H1 (cell line): ENCODE measurements at regions of chr17 and their contacts with region 1.

Region 1: DNA sequence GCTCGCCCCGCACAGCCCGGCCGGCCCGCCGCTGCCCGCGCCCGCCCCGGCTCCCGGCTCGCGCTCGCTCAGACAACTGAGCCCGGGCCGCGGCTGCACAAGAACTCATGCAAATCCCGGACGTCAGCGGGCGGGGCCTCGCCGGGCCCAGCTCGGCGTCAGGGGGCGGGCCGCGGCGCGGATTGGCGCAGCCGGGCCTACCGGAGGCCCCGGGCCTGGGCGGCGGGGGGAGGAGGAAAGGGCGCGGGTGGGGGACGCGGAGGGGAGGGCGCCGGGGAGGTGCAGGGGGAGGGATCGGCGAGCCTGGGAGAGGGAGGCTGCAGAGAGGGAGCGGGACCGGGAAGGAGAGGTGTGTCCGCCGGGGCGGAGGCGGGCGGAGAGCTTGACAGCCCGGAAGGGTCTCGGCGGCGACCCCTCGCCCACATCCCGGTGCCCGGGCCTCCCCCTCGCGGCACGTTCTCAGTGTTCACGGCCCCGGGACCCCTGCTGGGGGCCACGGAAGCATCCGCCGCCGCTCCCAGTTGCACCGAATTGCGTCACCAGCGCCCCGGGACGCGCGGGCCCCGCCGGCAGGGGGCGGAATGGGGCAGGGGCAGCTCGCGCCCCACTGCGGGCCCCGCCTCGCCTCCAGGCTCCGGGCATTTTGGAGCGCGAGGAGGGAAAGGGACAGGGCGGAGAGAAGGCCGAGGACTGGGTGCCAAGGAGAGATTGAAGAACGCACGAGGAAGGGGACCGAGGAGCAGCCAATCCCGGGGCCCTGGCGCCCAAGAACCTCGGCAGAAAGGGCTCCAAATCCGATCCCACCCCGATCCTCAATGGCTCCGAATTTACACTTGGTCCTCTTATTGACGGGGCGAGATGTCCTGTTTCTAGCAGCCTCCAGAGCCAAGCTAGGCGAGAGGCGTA is at the start of gene CBX4:
- DNase-seq: peak in 1 of 2 experiments; percentile 85
- H3K4me3 ChIP-seq: peak within 1 kb of the TSS; percentile 43 to 63 (median 60)
- H3K27ac ChIP-seq: no peak within 1 kb of the TSS
- H3K4me1 ChIP-seq: peaks cover 6 to 51% (median 38%) of the 10 kb centered on the region in 4 experiments
- H3K27me3 ChIP-seq: peaks cover 63 to 87% (median 84%) of the 10 kb centered on the region in 4 experiments
- CTCF ChIP-seq: peak; percentile 54 to 69 (median 61)
- EP300 ChIP-seq: 0 out of 3 replicates have a peak, but pooled peaks of 1 of the 2 experiments have one; percentile 27
- POLR2A ChIP-seq: peak in 1 of 2 experiments; percentile 50; a peak in 2 of 3 replicates
- RAD21 ChIP-seq: peak; percentile 17 to 45; a peak in 3 of 4 replicates
- total RNA-seq, gene CBX4: 3.2 and 4.0 TPM in 2 replicates

Region 2: GRCh38 chr17:79728226-79728907 is 111.2 kb before region 1 on chr17:
- CTCF ChIA-PET with region 1: no interaction called
- POLR2A ChIA-PET with region 1: no interaction called
- DNase-seq: peak; percentile 49 to 91
- H3K4me3 ChIP-seq: 0 out of 8 replicates have a peak overlapping the region, but pooled peaks of 1 of the 4 experiments have one; percentile 12
- H3K27ac ChIP-seq: no peak overlapping the region
- H3K4me1 ChIP-seq: peaks cover 0 to 6% (median 0%) of the 10 kb centered on the region in 4 experiments; a peak in 2 of 7 replicates
- H3K27me3 ChIP-seq: no peaks in the 10 kb centered on the region
- CTCF ChIP-seq: no peak
- EP300 ChIP-seq: no peak
- POLR2A ChIP-seq: no peak
- RAD21 ChIP-seq: no peak

Region 3: GRCh38 chr17:79777894-79778503 is 61.6 kb before region 1 on chr17 and contains the start of gene CBX2:
- CTCF ChIA-PET with region 1: interaction called, 10 read pairs
- POLR2A ChIA-PET with region 1: interaction called, 5 read pairs
- DNase-seq: peak in 1 of 2 experiments; percentile 85
- H3K4me3 ChIP-seq: peak within 1 kb of the TSS; percentile 57 to 97 (median 83)
- H3K27ac ChIP-seq: peak within 1 kb of the TSS; percentile 85
- H3K4me1 ChIP-seq: peaks cover 4 to 19% (median 15%) of the 10 kb centered on the region in 4 experiments
- H3K27me3 ChIP-seq: no peaks in the 10 kb centered on the region; a peak in 1 of 7 replicates
- CTCF ChIP-seq: no peak
- EP300 ChIP-seq: no peak
- POLR2A ChIP-seq: peak; percentile 63 to 85
- RAD21 ChIP-seq: no peak
- total RNA-seq, gene CBX2: 83.9 and 85.9 TPM in 2 replicates

Region 4: GRCh38 chr17:79796763-79797491 is 42.7 kb before region 1 on chr17 and contains the start of gene CBX8:
- CTCF ChIA-PET with region 1: interaction called, 576 read pairs
- POLR2A ChIA-PET with region 1: interaction called, 374 read pairs
- DNase-seq: peak; percentile 99 to 100
- H3K4me3 ChIP-seq: peak within 1 kb of the TSS; percentile 44 to 67 (median 53)
- H3K27ac ChIP-seq: peak within 1 kb of the TSS; percentile 66; the same call in 1 of the 2 replicates
- H3K4me1 ChIP-seq: peaks cover 8 to 58% (median 38%) of the 10 kb centered on the region in 4 experiments
- H3K27me3 ChIP-seq: peaks cover 80 to 92% (median 90%) of the 10 kb centered on the region in 4 experiments
- CTCF ChIP-seq: no peak
- EP300 ChIP-seq: peak in 1 of 2 experiments; percentile 59; a peak in 1 of 3 replicates
- POLR2A ChIP-seq: peak in 1 of 2 experiments; percentile 43; a peak in 1 of 3 replicates
- RAD21 ChIP-seq: no peak
- total RNA-seq, gene CBX8: 1.5 and 2.1 TPM in 2 replicates

Region 5: DNA sequence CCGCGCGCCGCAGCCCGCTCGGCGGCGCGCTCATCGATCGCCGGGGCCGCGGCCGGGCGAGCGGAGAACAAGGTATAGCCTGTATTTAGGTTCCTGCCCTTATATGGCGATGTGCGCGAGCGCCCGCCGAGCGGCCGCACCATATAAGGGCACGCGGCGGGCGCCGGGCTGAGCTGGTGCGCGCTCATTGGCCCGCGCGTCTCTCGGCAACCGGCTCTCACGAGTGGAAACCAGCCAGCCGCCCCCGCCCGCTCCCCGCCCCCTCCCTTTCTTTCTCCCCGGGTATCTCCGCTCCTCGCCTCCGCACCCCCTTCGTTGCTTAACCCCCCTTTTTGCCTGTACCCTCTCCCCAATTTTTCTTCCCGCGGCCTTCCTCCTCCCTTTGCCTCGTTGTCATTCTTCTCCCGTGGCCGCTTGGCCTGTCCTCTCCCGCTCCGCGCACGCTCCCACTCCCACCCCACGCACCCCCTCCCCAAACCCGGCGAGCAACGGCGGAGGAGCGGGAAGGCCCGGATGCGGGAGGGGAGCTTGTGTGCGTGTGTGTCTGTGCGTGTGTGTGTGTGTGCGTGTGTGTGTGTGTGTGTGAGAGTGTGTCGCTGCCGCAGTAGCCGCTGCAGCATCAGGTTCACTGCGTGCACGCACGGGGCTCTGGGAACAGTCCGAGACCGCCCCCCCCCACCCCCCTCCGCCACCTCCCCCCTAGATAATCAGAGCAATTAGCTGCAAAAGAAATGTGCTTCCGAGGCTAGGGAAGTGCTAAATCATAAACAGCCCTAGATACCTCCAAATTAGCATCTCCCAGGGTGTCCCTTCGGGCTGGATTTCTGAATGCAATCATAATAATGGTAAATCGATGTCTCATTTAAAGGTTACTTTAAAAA is 29.2 kb before region 1 on chr17:
- CTCF ChIA-PET with region 1: interaction called, 576 read pairs
- POLR2A ChIA-PET with region 1: interaction called, 374 read pairs
- DNase-seq: peak in 1 of 2 experiments; percentile 79
- H3K4me3 ChIP-seq: peak overlapping the region in 2 of 4 experiments; percentile 16 to 55; a peak in 3 of 8 replicates
- H3K27ac ChIP-seq: no peak overlapping the region
- H3K4me1 ChIP-seq: peaks cover 0 to 54% (median 40%) of the 10 kb centered on the region in 4 experiments; a peak in 6 of 7 replicates
- H3K27me3 ChIP-seq: peaks cover 82 to 95% (median 93%) of the 10 kb centered on the region in 4 experiments
- CTCF ChIP-seq: no peak
- EP300 ChIP-seq: no peak
- POLR2A ChIP-seq: no peak
- RAD21 ChIP-seq: no peak

Region 6: DNA sequence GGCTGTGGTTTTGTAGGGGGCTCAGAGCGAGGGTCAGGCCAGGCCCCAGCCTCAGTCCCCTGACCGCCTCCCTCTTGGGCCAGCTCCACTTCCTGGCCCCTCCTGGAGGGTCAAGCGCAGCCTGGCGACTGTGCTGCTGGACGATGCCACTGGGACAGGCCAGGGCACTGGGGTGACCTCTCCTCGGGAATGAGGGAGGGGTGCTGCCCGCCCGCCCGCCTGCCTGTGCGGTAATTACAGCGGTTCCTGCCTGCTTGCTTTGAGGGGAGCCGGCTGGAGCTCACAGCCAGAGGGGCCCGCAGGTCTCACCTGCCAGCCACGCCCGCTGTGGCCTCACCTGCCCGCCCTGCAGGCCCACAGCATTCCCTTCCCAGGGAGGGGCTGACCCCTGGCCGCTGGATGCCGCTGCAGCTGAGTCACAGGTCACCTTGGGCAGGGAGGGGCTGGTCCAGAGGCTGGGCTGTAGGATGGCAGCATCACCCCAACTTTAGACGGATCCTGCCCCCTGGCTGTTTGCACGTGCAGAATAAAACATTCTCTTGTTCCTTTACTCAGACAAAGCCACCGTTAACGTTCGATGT is 76.3 kb after region 1 on chr17:
- CTCF ChIA-PET with region 1: interaction called, 181 read pairs
- POLR2A ChIA-PET with region 1: interaction called, 4 read pairs
- DNase-seq: peak; percentile 64 to 74
- H3K4me3 ChIP-seq: no peak overlapping the region
- H3K27ac ChIP-seq: no peak overlapping the region
- H3K4me1 ChIP-seq: peaks cover 0 to 8% (median 4%) of the 10 kb centered on the region in 4 experiments; a peak in 5 of 7 replicates
- H3K27me3 ChIP-seq: no peaks in the 10 kb centered on the region; a peak in 2 of 7 replicates
- CTCF ChIP-seq: peak; percentile 52 to 69 (median 68)
- EP300 ChIP-seq: no peak
- POLR2A ChIP-seq: no peak
- RAD21 ChIP-seq: peak; percentile 79 to 82

Region 7: GRCh38 chr17:79951361-79952264 is 112.0 kb after region 1 on chr17:
- CTCF ChIA-PET with region 1: interaction called, 17 read pairs
- POLR2A ChIA-PET with region 1: interaction called, 8 read pairs
- DNase-seq: no peak
- H3K4me3 ChIP-seq: peak overlapping the region in 1 of 4 experiments; percentile 54; a peak in 1 of 8 replicates
- H3K27ac ChIP-seq: no peak overlapping the region; the same call in 1 of the 2 replicates
- H3K4me1 ChIP-seq: peaks cover 20 to 64% (median 47%) of the 10 kb centered on the region in 4 experiments
- H3K27me3 ChIP-seq: no peaks in the 10 kb centered on the region
- CTCF ChIP-seq: no peak
- EP300 ChIP-seq: no peak
- POLR2A ChIP-seq: no peak
- RAD21 ChIP-seq: no peak

Region 8: GRCh38 chr17:80071116-80071980 is 231.7 kb after region 1 on chr17:
- CTCF ChIA-PET with region 1: no interaction called
- POLR2A ChIA-PET with region 1: no interaction called
- DNase-seq: no peak
- H3K4me3 ChIP-seq: no peak overlapping the region
- H3K27ac ChIP-seq: no peak overlapping the region
- H3K4me1 ChIP-seq: no peaks in the 10 kb centered on the region
- H3K27me3 ChIP-seq: no peaks in the 10 kb centered on the region
- CTCF ChIP-seq: no peak
- EP300 ChIP-seq: no peak
- POLR2A ChIP-seq: no peak
- RAD21 ChIP-seq: no peak